GM18951 (cell line): ENCODE measurements at regions of chr14 and their contacts with region 1.

Region 1: DNA sequence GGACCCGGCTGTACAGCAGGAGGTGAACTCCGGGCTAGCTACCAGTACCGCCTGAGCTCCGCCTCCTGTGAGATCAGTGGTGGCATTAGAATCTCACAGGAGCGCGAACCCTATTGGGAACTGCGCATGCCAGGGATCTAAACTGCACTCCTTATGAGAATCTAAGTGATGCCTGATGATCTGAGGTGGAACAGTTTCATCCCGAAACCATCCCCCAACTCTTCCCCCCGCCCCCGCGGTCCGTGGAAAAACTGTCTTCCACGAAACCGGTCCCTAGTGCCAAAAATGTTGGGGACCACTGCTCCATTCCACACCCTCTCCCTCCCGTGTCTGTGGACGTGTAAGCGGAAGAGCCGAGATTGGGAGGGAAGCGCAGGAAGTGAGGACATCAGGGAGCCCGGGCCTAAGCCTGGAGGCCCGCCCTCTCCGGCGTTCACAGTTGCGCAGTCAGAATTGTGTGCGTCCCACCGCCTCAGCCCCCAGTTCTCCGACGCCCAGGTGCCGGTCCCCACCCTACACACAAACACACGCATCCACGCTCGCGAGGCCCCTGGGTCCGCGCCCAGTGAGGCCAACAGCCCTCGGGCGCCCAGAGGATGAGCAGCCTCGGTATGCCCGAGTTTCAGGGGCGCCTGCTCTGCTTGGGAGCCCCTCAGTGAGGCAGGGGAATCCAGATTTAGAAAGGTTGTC is 1.8 kb upstream of the RNASE4 start:
- POLR2A ChIP-seq: peak; percentile 73

Region 2: DNA sequence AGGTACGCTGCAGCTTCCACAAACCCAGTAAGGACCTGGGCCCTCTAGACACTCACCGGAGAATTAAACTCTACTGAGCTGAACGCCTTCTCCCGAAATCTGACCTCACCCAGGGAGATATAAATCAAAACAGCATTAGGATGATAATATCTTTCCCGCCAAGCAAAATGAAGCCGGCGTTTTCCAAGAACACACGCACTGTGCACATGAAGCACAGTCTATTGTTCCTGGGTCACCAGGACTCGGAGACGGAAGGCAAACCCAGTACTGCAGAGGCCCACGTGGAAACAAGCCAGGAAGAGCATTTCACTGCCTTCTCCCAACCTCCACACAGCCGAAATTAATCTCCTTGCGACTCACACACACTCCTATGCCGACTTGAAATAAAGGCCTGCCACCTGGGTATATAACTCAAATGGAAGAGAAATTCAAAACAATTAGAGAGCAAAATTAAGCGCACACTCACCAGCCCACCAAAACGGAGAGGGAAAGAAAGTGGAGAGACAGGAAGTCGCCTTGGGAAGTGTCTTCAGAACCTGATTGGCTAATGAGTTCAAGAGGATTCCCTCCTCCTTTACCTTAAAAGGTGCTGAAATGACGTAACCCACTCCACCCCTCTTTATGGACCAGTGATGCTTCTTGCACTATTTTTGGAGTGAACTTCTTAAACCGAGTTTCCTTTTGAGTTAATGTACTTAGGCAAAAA is 349.6 kb before region 1 on chr14 and contains the start of gene CCNB1IP1:
- in situ Hi-C with region 1: loop called (anchors 10 kb)
- POLR2A ChIP-seq: peak; percentile 63

Region 3: GRCh38 chr14:20613094-20614037 is 69.2 kb before region 1 on chr14:
- in situ Hi-C with region 1: loop called (anchors 5 kb)
- POLR2A ChIP-seq: peak; percentile 34

Region 4: DNA sequence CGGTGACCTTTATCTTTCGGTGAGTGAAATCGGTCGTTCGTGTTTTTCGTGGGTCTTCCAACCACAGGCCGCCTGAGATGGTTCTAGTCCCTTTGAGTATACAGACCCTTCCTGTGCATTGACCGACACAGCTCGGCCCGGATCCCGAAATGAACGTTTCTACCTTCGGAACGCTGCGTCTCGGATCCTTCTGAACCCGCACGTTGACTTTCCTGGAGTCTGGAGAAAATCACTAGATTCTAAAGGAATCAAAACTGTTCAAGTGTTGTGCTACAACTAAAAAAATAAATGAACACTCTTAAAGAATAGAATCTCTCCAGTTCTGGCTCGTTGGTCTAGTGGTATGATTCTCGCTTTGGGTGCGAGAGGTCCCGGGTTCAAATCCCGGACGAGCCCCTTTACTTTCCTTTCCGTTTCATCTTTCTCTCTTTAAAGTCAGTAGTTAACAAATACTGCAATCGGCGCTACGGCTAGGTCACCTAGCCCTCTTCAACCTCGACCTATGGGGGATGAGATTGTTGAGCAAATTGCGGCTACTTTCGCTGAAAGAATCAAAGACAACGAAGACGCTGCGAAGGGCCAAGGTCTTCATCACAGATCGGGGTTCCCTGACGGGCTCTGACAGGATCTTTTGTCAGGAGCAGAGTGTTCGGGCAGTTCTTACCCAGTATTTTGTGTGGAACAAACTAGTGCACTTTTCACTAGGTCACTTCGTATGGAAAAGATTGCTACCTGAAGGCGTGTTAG is 49.7 kb before region 1 on chr14:
- in situ Hi-C with region 1: loop called (anchors 10 kb)
- POLR2A ChIP-seq: no peak